Posterior cingulate gyrus (tissue), 11 donors: ENCODE measurements at regions of chr1 and their contacts with region 1.

Region 1: GRCh38 chr1:242454262-242455045 is 70.0 kb downstream of the PLD5 start:
- DNase-seq: peak in 1 of 10 donors; percentile 14

Region 2: DNA sequence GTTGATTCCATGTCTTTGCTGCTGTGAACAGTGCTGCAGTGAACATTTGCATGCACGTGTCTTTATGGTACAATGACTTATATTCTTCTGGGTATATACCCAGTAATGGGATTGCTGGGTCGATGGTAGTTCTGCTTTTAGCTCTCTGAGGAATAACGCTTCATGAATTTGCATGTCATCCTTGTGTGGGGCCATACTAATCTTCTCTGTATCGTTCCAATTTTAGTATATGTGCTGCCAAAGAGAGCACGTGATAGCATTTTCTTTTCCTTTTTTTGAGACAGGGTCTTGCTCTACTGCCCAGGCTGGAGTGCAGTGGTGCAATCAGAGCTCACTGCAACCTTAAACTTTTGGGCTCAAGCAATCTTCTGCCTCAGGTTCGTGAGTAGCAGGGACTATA is 430.6 kb before region 1 on chr1:
- intact Hi-C with region 1: loop called (anchors 10 kb)
- DNase-seq: no peak

Region 3: GRCh38 chr1:242386227-242386626 is 68.2 kb before region 1 on chr1:
- intact Hi-C with region 1: no loop called
- DNase-seq: no peak